ENCODE measurements at regions of chr4 and their contacts with region 1.

Region 1: GRCh38 chr4:113394730-113395530 is 345.5 kb downstream of the ANK2 start:
- DNase-seq: peak; percentile 43
- H3K4me3 Mint-ChIP-seq: no peak overlapping the region
- H3K27ac Mint-ChIP-seq: no peak overlapping the region
- H3K4me1 Mint-ChIP-seq: peaks cover 6% of the 10 kb centered on the region
- H3K27me3 Mint-ChIP-seq: peaks cover 2% of the 10 kb centered on the region

Region 2: GRCh38 chr4:113636438-113636818 is 241.5 kb after region 1 on chr4:
- CTCF ChIA-PET with region 1: no interaction called
- POLR2A ChIA-PET with region 1: no interaction called
- intact Hi-C with region 1: loop called (anchors 10 kb)
- DNase-seq: no peak
- H3K4me3 Mint-ChIP-seq: peak overlapping the region; percentile 21
- H3K27ac Mint-ChIP-seq: peak overlapping the region; percentile 75
- H3K4me1 Mint-ChIP-seq: peaks cover 41% of the 10 kb centered on the region
- H3K27me3 Mint-ChIP-seq: no peaks in the 10 kb centered on the region

Region 3: DNA sequence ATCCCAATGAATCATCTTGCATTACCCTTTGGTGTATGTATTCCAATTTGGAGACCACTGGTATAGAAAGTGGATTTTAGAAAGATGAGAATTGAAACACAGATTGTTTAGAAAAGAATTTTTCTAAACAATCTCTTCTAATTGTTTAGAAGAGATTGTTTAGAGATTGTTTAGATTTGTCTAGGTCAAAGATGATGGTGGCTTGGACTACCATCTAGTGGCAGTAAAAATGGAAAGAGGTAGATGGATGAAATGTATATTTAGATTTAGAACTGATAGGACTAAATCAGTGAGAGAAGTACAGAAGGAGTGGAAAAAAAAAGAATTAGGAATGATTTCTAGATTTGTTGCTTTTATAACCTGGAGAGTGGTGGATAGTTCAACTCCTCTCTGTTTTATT is 513.9 kb after region 1 on chr4:
- CTCF ChIA-PET with region 1: interaction called, 5 read pairs
- POLR2A ChIA-PET with region 1: no interaction called
- intact Hi-C with region 1: loop called (anchors 1 kb)
- DNase-seq: no peak
- H3K4me3 Mint-ChIP-seq: no peak overlapping the region
- H3K27ac Mint-ChIP-seq: no peak overlapping the region
- H3K4me1 Mint-ChIP-seq: peaks cover 17% of the 10 kb centered on the region
- H3K27me3 Mint-ChIP-seq: no peaks in the 10 kb centered on the region

Region 4: GRCh38 chr4:114077610-114078009 is 682.7 kb after region 1 on chr4:
- CTCF ChIA-PET with region 1: interaction called, 17 read pairs
- POLR2A ChIA-PET with region 1: no interaction called
- intact Hi-C with region 1: no loop called
- DNase-seq: no peak
- H3K4me3 Mint-ChIP-seq: no peak overlapping the region
- H3K27ac Mint-ChIP-seq: no peak overlapping the region
- H3K4me1 Mint-ChIP-seq: no peaks in the 10 kb centered on the region
- H3K27me3 Mint-ChIP-seq: no peaks in the 10 kb centered on the region

Region 5: GRCh38 chr4:114180481-114180880 is 785.6 kb after region 1 on chr4:
- CTCF ChIA-PET with region 1: interaction called, 5 read pairs
- POLR2A ChIA-PET with region 1: no interaction called
- intact Hi-C with region 1: loop called (anchors 2 kb)
- DNase-seq: peak; percentile 46
- H3K4me3 Mint-ChIP-seq: no peak overlapping the region
- H3K27ac Mint-ChIP-seq: no peak overlapping the region
- H3K4me1 Mint-ChIP-seq: no peaks in the 10 kb centered on the region
- H3K27me3 Mint-ChIP-seq: no peaks in the 10 kb centered on the region

Region 6: GRCh38 chr4:114386637-114387233 is 991.8 kb after region 1 on chr4:
- CTCF ChIA-PET with region 1: interaction called, 5 read pairs
- POLR2A ChIA-PET with region 1: no interaction called
- intact Hi-C with region 1: loop called (anchors 2 kb)
- DNase-seq: no peak
- H3K4me3 Mint-ChIP-seq: no peak overlapping the region
- H3K27ac Mint-ChIP-seq: no peak overlapping the region
- H3K4me1 Mint-ChIP-seq: no peaks in the 10 kb centered on the region
- H3K27me3 Mint-ChIP-seq: peaks cover 10% of the 10 kb centered on the region

Region 7: GRCh38 chr4:114694770-114695169 is 1299.8 kb after region 1 on chr4:
- CTCF ChIA-PET with region 1: no interaction called
- POLR2A ChIA-PET with region 1: no interaction called
- intact Hi-C with region 1: loop called (anchors 2 kb)
- DNase-seq: no peak
- H3K4me3 Mint-ChIP-seq: no peak overlapping the region
- H3K27ac Mint-ChIP-seq: no peak overlapping the region
- H3K4me1 Mint-ChIP-seq: no peaks in the 10 kb centered on the region
- H3K27me3 Mint-ChIP-seq: peaks cover 3% of the 10 kb centered on the region